Adrenal gland (tissue), 19 donors: ENCODE measurements at regions of chr6 and their contacts with region 1.

Region 1: DNA sequence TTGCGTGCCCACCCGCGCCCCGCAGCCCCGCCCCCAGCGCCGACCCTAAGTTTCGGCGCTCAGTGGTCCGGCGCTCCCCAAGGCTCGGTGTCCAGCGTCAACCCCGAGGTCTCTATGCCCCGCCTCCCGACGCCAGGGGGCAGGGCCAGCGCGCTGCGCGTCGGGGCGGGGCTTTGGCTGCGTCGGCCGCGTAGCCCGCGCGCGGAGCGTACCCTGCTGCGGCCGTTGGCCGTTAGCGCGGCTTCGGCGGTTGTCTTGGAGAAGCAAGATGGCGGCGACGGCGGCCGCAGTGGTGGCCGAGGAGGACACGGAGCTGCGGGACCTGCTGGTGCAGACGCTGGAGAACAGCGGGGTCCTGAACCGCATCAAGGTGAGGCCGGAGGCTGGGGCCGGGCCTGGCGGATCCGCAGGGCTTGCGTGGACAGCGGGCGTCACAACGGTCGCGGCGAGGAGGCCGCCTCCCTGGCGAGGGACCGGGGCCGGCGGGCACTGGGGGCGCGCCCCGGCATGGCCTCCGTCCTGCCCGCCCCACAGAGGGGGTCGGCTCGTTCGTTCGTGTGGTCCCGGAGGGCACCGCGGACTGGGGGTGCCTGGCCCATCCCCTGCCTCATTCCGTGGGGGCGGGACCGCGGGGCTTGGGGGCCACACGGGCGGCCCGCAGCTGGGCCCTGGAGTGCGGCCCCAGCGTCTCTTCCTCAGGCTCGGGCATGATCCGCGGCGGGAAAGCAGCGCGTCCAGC is at the start of gene CEP43:
- DNase-seq: peak; percentile 94 to 96 (median 95)
- H3K4me3 ChIP-seq: peak within 1 kb of the TSS; percentile 81 to 97 (median 86)
- H3K27ac ChIP-seq: peak within 1 kb of the TSS in 4 of 5 donors; percentile 60 to 77 (median 70)
- H3K4me1 ChIP-seq: peaks cover 3 to 32% of the 10 kb centered on the region in 2 donors
- H3K27me3 ChIP-seq: no peaks in the 10 kb centered on the region
- CTCF ChIP-seq: peak in 2 of 6 experiments; percentile 8 to 45
- POLR2A ChIP-seq: peak; percentile 29 to 54
- total RNA-seq, gene CEP43: 12.7 to 36.7 (median 18.6) TPM

Region 2: GRCh38 chr6:167141667-167142432 is 142.5 kb after region 1 on chr6:
- intact Hi-C with region 1: loop called (anchors 5 to 10 kb)
- DNase-seq: peak; percentile 41 to 72 (median 59)
- H3K4me3 ChIP-seq: no peak overlapping the region
- H3K27ac ChIP-seq: no peak overlapping the region
- H3K4me1 ChIP-seq: peaks cover 0 to 3% of the 10 kb centered on the region in 2 donors
- H3K27me3 ChIP-seq: no peaks in the 10 kb centered on the region
- CTCF ChIP-seq: peak; percentile 61 to 84 (median 80)
- POLR2A ChIP-seq: no peak